K562 (cell line): ENCODE measurements at regions of chr6 and their contacts with region 1.

Region 1: GRCh38 chr6:111483736-111484632 is 966 bp upstream of the REV3L start:
- DNase-seq: peak; percentile 82 to 96 (median 88)
- ATAC-seq: peak; percentile 75
- H3K4me3 ChIP-seq: peak overlapping the region; percentile 87
- H3K27ac ChIP-seq: peak overlapping the region; percentile 96
- H3K4me1 ChIP-seq: peaks cover 0 to 9% of the 10 kb centered on the region in 2 experiments; a peak in 3 of 5 replicates
- H3K27me3 ChIP-seq: no peaks in the 10 kb centered on the region
- CTCF ChIP-seq: no peak
- EP300 ChIP-seq: peak; percentile 48
- POLR2A ChIP-seq: peak; percentile 94
- RAD21 ChIP-seq: peak in 1 of 2 experiments; percentile 24; a peak in 1 of 4 replicates

Region 2: GRCh38 chr6:110746680-110747079 is 737.3 kb before region 1 on chr6:
- CTCF ChIA-PET with region 1: no interaction called
- POLR2A ChIA-PET with region 1: no interaction called
- in situ Hi-C with region 1: no loop called
- intact Hi-C with region 1: no loop called
- DNase-seq: no peak
- ATAC-seq: peak; percentile 57; the same call in 1 of the 3 replicates
- H3K4me3 ChIP-seq: no peak overlapping the region
- H3K27ac ChIP-seq: no peak overlapping the region
- H3K4me1 ChIP-seq: peaks cover 0 to 5% of the 10 kb centered on the region in 2 experiments; a peak in 1 of 5 replicates
- H3K27me3 ChIP-seq: no peaks in the 10 kb centered on the region
- CTCF ChIP-seq: no peak
- EP300 ChIP-seq: no peak
- POLR2A ChIP-seq: no peak
- RAD21 ChIP-seq: no peak

Region 3: DNA sequence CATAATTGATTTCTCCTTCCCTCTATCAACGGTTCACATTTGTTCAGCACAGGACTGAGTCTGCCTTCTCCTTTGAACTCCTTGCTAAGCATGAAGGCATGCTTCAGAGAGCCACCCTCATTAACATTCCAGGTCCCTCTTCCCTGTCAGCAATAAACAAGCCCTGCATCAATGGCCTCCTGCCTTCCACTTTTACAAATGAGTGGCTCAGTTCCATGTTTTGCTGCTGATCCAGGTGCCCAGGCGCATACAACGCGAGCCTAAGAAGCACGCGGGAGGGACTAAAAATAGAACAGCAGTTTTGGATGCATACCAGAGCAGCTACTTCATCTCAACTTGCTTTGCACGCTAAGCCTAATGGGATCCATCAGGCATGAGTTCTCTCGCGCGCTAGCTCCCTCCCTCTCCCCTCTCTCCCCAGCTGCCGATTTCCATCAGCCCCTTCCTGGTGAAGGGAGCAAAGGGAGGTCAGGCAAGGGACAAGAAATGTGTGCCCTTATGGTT is 68.3 kb after region 1 on chr6:
- CTCF ChIA-PET with region 1: no interaction called
- POLR2A ChIA-PET with region 1: interaction called, 4 read pairs
- in situ Hi-C with region 1: no loop called
- intact Hi-C with region 1: loop called (anchors 5 kb)
- DNase-seq: peak in 1 of 4 experiments; percentile 25
- ATAC-seq: peak; percentile 72
- H3K4me3 ChIP-seq: no peak overlapping the region
- H3K27ac ChIP-seq: no peak overlapping the region
- H3K4me1 ChIP-seq: peaks cover 5 to 8% of the 10 kb centered on the region in 2 experiments; a peak in 2 of 5 replicates
- H3K27me3 ChIP-seq: no peaks in the 10 kb centered on the region
- CTCF ChIP-seq: no peak
- EP300 ChIP-seq: no peak
- POLR2A ChIP-seq: no peak
- RAD21 ChIP-seq: no peak

Region 4: DNA sequence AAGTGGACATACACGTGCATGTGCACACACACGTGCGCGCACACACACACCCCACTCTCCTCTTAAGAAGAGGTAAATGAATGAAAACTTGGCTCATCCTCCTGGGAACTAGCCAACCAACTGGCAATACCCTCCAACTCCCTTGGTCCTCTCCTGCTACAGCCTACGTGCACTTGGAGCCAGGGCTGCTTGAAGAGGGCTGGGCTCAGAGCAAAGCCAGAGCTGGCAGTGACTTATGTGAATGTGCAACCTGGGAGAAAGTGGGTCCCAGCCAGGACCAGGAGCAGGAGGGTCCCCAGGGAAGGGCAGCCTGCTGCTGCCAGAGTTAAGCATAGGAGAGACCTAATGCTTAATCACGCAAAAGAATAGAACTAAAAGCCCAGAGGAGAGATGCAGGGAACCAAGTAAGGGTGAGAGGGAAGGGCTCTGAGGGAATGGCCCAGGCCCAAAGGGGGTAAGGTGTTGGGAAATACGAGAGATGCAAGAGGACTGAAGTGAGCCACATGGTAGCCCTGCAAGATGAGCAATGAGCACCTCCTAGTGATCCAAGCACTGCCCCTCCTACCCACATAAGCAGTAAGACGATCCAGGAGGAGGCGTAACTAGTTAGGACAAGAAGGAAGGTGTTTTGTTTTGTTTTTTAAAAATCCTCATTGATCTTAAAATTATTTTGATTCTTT is 97.0 kb after region 1 on chr6:
- CTCF ChIA-PET with region 1: no interaction called
- POLR2A ChIA-PET with region 1: interaction called, 3 read pairs
- in situ Hi-C with region 1: no loop called
- intact Hi-C with region 1: loop called (anchors 1 kb)
- DNase-seq: no peak
- ATAC-seq: peak; percentile 82
- H3K4me3 ChIP-seq: no peak overlapping the region
- H3K27ac ChIP-seq: no peak overlapping the region
- H3K4me1 ChIP-seq: peaks cover 0 to 10% of the 10 kb centered on the region in 2 experiments; a peak in 2 of 5 replicates
- H3K27me3 ChIP-seq: no peaks in the 10 kb centered on the region
- CTCF ChIP-seq: peak; percentile 29 to 78 (median 64); a peak in 4 of 6 replicates
- EP300 ChIP-seq: no peak
- POLR2A ChIP-seq: no peak
- RAD21 ChIP-seq: peak; percentile 33 to 66; a peak in 3 of 4 replicates

Region 5: DNA sequence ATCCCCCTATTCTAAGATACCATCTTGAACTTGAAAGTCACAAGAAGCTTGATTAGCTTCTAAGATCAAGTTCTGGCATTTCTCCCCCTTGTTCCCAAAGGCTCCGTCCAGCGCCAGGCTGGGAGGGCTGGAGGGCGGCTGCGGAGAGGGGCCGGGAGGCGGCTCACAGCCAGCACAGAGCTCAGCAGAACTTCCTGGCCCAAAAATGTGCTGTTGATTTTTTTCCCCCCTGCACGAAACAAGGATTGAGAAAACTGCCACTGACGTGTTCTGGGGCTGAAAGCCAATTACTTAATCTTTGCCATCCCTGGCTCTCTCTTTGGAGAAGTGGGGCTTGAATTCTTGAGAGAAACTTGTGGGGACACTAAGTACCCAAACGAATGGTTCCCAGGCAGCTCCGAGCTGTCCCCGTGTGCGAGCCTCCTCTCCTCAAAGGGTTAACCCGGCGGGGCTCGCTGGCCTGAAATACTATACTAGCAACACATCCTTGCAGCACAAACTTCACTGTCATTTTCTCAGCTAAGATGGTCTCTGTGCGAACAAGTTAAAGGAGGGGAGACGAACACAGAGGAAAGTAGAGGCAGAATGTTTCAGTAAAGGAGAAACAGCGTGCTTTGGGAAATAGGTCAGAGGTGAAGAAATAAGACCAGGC is 121.2 kb after region 1 on chr6:
- CTCF ChIA-PET with region 1: no interaction called
- POLR2A ChIA-PET with region 1: interaction called, 6 read pairs
- in situ Hi-C with region 1: no loop called
- intact Hi-C with region 1: loop called (anchors 2 kb)
- DNase-seq: peak; percentile 43 to 67 (median 52)
- ATAC-seq: peak; percentile 77
- H3K4me3 ChIP-seq: peak overlapping the region; percentile 53
- H3K27ac ChIP-seq: peak overlapping the region; percentile 92
- H3K4me1 ChIP-seq: peaks cover 26 to 32% of the 10 kb centered on the region in 2 experiments
- H3K27me3 ChIP-seq: no peaks in the 10 kb centered on the region
- CTCF ChIP-seq: no peak
- EP300 ChIP-seq: no peak
- POLR2A ChIP-seq: no peak
- RAD21 ChIP-seq: no peak

Region 6: DNA sequence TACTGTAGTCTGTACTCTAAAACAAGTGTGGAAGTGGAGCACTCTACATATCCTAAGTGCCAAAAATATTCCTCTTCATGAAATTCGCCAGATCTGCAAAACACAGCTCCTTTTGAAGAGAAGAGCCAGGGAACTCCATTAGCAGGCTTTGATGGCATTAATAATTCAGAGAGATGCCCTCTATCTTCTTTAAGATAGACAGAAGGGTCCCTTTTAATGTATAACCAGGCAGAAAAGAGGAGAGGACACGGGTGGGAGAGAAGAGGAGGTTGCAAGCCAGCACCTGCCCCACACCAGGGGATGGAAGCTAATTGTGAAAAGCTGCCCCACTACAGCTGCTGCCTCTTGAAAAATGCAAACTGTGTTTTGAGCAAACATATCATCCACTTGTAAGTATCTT is 859.4 kb after region 1 on chr6:
- CTCF ChIA-PET with region 1: no interaction called
- POLR2A ChIA-PET with region 1: no interaction called
- in situ Hi-C with region 1: no loop called
- intact Hi-C with region 1: no loop called
- DNase-seq: no peak
- ATAC-seq: no peak
- H3K4me3 ChIP-seq: no peak overlapping the region
- H3K27ac ChIP-seq: no peak overlapping the region
- H3K4me1 ChIP-seq: no peaks in the 10 kb centered on the region; a peak in 1 of 5 replicates
- H3K27me3 ChIP-seq: no peaks in the 10 kb centered on the region; a peak in 1 of 5 replicates
- CTCF ChIP-seq: no peak
- EP300 ChIP-seq: no peak
- POLR2A ChIP-seq: no peak
- RAD21 ChIP-seq: no peak